ENCODE measurements at regions of chr6 and their contacts with region 1.

Region 1: GRCh38 chr6:136737871-136738691 is 54.2 kb downstream of the MAP3K5 start:
- DNase-seq: no peak
- ATAC-seq: no peak
- H3K4me3 ChIP-seq: no peak overlapping the region
- H3K4me3 Mint-ChIP-seq: no peak overlapping the region
- H3K27ac ChIP-seq: no peak overlapping the region
- H3K27ac Mint-ChIP-seq: no peak overlapping the region
- H3K4me1 ChIP-seq: no peaks in the 10 kb centered on the region
- H3K4me1 Mint-ChIP-seq: peaks cover 24% of the 10 kb centered on the region
- H3K27me3 ChIP-seq: no peaks in the 10 kb centered on the region
- H3K27me3 Mint-ChIP-seq: no peaks in the 10 kb centered on the region
- CTCF ChIP-seq: no peak

Region 2: GRCh38 chr6:136657666-136658065 is 80.4 kb before region 1 on chr6:
- CTCF ChIA-PET with region 1: no interaction called
- POLR2A ChIA-PET with region 1: no interaction called
- intact Hi-C with region 1: loop called in 1 of 2 experiments (anchors 5 kb)
- DNase-seq: no peak
- ATAC-seq: no peak
- H3K4me3 ChIP-seq: no peak overlapping the region
- H3K4me3 Mint-ChIP-seq: no peak overlapping the region
- H3K27ac ChIP-seq: no peak overlapping the region
- H3K27ac Mint-ChIP-seq: peak overlapping the region; percentile 0
- H3K4me1 ChIP-seq: no peaks in the 10 kb centered on the region
- H3K4me1 Mint-ChIP-seq: no peaks in the 10 kb centered on the region
- H3K27me3 ChIP-seq: no peaks in the 10 kb centered on the region
- H3K27me3 Mint-ChIP-seq: no peaks in the 10 kb centered on the region
- CTCF ChIP-seq: no peak